OCI-LY7 (cell line): ENCODE measurements at regions of chr10 and their contacts with region 1.

Region 1: DNA sequence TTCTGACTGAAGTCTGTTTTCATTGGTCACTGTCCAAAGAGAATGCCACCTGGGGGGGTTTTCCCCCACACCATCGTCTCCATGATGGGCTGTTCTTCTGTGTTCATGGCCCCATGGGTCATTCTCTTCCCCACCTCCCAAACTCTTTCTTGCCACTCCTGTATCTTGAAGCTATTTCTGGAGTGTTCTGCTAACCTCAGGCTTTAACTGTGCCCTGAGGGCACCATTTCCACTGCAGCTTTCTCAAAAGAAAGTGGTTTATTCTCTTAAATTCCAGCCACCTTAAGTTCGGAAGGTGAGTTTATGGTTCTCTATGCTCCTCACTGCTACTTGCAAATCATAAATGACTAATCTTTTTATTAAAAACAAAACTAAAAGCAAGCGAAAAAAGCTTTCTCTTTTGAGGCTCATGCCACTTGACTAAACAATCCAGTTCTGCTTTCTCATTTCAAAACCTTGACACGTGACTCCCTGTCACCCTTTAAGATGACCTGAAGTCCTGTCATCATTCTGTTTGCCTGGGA is 7.4 kb upstream of the APBB1IP start:
- DNase-seq: peak; percentile 68
- H3K4me3 ChIP-seq: no peak overlapping the region
- H3K27ac ChIP-seq: no peak overlapping the region
- H3K4me1 ChIP-seq: peaks cover 19% of the 10 kb centered on the region
- CTCF ChIP-seq: no peak

Region 2: DNA sequence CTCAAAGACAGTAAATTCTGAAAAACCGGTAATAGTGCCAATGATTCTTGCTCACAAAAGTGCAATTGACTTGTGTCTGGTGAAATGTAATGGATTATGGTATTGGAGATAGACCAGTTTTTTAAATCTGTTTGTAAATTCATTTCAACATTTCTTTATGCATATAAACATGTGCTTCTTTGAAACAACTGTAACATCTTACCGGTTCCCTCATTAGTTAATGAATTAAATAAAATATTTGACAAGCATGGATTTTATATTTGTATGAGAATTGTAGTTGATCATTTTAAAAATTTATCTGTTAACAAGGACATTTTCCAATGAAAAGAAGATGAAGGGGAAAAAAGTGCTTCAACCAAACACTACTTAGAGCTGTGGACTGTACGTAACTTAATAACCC is 13.6 kb before region 1 on chr10:
- CTCF ChIA-PET with region 1: no interaction called
- POLR2A ChIA-PET with region 1: interaction called, 15 read pairs
- intact Hi-C with region 1: no loop called
- DNase-seq: no peak
- H3K4me3 ChIP-seq: no peak overlapping the region
- H3K27ac ChIP-seq: no peak overlapping the region
- H3K4me1 ChIP-seq: peaks cover 21% of the 10 kb centered on the region
- CTCF ChIP-seq: no peak